ENCODE measurements at regions of chr17 and their contacts with region 1.

Region 1: GRCh38 chr17:34542700-34543336 is 36.6 kb upstream of the TMEM132E start:
- DNase-seq: peak; percentile 6 to 49 (median 26)
- H3K4me3 ChIP-seq: no peak overlapping the region
- H3K4me3 Mint-ChIP-seq: no peak overlapping the region
- H3K27ac ChIP-seq: no peak overlapping the region
- H3K27ac Mint-ChIP-seq: no peak overlapping the region
- H3K4me1 ChIP-seq: no peaks in the 10 kb centered on the region
- H3K4me1 Mint-ChIP-seq: no peaks in the 10 kb centered on the region
- H3K27me3 ChIP-seq: peaks cover 7 to 16% of the 10 kb centered on the region in 2 donors
- H3K27me3 Mint-ChIP-seq: peaks cover 13 to 25% (median 25%) of the 10 kb centered on the region in 3 donors
- CTCF ChIP-seq: peak; percentile 98

Region 2: GRCh38 chr17:34291721-34292348 is 251.0 kb before region 1 on chr17:
- intact Hi-C with region 1: no loop called
- DNase-seq: peak in 2 of 3 donors; percentile 42 to 68
- H3K4me3 ChIP-seq: no peak overlapping the region
- H3K4me3 Mint-ChIP-seq: no peak overlapping the region
- H3K27ac ChIP-seq: no peak overlapping the region
- H3K27ac Mint-ChIP-seq: no peak overlapping the region
- H3K4me1 ChIP-seq: no peaks in the 10 kb centered on the region
- H3K4me1 Mint-ChIP-seq: peaks cover 2% of the 10 kb centered on the region
- H3K27me3 ChIP-seq: peaks cover 0 to 3% of the 10 kb centered on the region in 2 donors
- H3K27me3 Mint-ChIP-seq: peaks cover 5 to 17% (median 6%) of the 10 kb centered on the region in 3 donors
- CTCF ChIP-seq: no peak

Region 3: GRCh38 chr17:34683390-34683789 is 140.6 kb after region 1 on chr17:
- intact Hi-C with region 1: no loop called
- DNase-seq: no peak
- H3K4me3 ChIP-seq: no peak overlapping the region
- H3K4me3 Mint-ChIP-seq: no peak overlapping the region
- H3K27ac ChIP-seq: no peak overlapping the region
- H3K27ac Mint-ChIP-seq: no peak overlapping the region
- H3K4me1 ChIP-seq: no peaks in the 10 kb centered on the region
- H3K4me1 Mint-ChIP-seq: no peaks in the 10 kb centered on the region
- H3K27me3 ChIP-seq: peaks cover 0 to 2% of the 10 kb centered on the region in 2 donors
- H3K27me3 Mint-ChIP-seq: peaks cover 10 to 15% (median 12%) of the 10 kb centered on the region in 3 donors
- CTCF ChIP-seq: no peak

Region 4: DNA sequence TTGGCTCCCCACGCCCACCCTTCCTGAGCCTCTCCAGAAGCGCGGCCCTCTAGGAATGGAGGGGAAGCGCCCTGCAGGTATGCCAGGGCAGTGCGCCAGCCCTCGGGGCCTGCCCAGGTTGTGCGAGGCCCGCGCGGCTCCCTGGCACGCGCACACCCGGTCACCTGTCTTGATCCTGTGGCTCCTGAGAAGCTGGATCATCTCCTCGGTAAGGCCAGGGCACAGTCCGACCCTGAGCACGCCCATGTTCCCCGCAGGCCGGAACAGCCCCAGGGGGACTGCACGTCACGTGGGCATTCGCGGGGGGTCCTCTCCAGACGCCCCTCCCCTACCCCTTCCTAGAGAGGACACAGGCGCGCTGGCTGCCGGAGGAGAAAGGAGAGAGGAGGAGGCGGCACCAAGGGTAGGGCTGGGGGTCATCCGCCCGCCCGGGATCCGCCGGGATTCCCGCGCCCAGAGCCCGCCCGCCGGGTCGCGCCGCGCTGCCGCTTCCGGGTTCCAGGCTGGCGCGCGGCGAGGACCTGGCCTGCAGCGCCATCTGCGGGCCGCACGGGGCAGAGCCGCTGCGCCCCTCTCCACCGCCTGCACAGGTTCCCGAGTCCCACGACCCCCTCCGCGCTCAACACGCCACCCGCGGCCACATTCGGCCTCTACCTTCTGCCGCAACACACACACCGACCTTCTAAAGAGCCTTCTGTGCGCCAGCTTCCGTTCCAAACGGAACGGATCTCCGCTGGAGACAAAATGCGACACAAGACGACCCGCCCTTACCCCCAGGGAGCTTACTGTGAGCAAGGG is 576.7 kb after region 1 on chr17 and contains the start of gene RAD51D:
- intact Hi-C with region 1: loop called (anchors 2 to 5 kb)
- DNase-seq: peak; percentile 62 to 74 (median 72)
- H3K4me3 ChIP-seq: peak within 1 kb of the TSS; percentile 73 to 97 (median 83)
- H3K4me3 Mint-ChIP-seq: peak within 1 kb of the TSS; percentile 90 to 95
- H3K27ac ChIP-seq: peak within 1 kb of the TSS in 1 of 2 donors; percentile 82
- H3K27ac Mint-ChIP-seq: peak within 1 kb of the TSS; percentile 70 to 89 (median 77)
- H3K4me1 ChIP-seq: peaks cover 16 to 21% of the 10 kb centered on the region in 2 donors
- H3K4me1 Mint-ChIP-seq: peaks cover 35% of the 10 kb centered on the region
- H3K27me3 ChIP-seq: no peaks in the 10 kb centered on the region
- H3K27me3 Mint-ChIP-seq: peaks cover 0 to 5% (median 4%) of the 10 kb centered on the region in 3 donors
- CTCF ChIP-seq: peak; percentile 90
- polyA plus RNA-seq, gene RAD51D: 4.4 to 6.9 (median 5.8) TPM